RWPE1 (cell line): ENCODE measurements at regions of chr14 and their contacts with region 1.

Region 1: DNA sequence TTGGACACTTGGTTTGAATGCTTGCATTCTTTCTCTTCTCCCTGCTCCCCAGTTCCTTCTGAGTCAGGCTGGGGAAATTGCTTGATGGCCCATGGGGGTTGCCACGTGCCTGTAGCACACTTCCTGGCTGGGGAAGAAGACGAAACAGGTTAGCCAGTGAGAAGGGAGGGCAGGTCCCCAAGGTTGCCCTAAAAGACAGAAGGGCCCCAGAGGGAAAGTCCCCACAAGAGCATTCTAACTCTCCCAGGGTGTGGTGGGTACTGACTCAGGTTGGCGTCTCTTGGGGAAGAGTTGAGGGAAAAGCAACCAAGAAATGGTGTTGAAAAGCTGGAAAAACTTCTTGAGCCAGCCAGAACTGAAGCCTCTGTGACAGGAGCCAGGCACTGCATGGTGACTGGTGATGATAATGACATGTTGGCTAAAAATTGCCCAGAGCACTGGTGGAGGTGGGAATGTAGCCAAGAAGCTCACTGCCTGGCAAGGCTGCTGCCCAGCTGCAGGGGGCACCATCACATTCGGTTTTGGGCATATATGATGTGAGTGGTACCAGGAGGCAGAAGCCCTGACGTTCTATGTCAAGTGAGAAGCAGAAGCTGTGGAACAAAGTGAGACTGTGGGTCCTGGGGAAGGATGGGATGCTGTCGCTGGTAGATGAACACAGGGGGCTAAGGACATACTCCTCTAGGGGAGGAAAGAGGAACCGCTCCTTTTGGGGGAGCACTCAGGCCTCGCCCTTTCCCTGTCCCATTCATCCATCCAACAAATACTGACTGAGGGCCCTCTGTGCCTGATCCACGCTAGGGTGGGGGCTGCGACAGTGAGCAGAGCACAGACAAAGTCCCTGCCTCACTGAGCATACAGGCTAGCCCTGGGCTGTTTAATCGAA is 8.1 kb upstream of the RABGGTA start:
- DNase-seq: no peak
- H3K27ac ChIP-seq: peak overlapping the region; percentile 21
- CTCF ChIP-seq: no peak

Region 2: GRCh38 chr14:24299255-24300195 is 20.0 kb after region 1 on chr14 and contains the starts of genes DHRS1 and NOP9:
- CTCF ChIA-PET with region 1: interaction called, 15 read pairs
- POLR2A ChIA-PET with region 1: no interaction called
- DNase-seq: peak; percentile 95
- H3K27ac ChIP-seq: peak within 1 kb of the TSS; percentile 94
- CTCF ChIP-seq: no peak